GM12878 (cell line): ENCODE measurements at regions of chr11 and their contacts with region 1.

Region 1: GRCh38 chr11:79400717-79401686 is 39.8 kb downstream of the TENM4 start:
- DNase-seq: no peak
- ATAC-seq: peak; percentile 97
- H3K4me3 ChIP-seq: no peak overlapping the region
- H3K27ac ChIP-seq: no peak overlapping the region
- H3K4me1 ChIP-seq: 0 out of 2 replicates have a peak, but pooled peaks cover 3% of the 10 kb centered on the region
- H3K27me3 ChIP-seq: no peaks in the 10 kb centered on the region
- CTCF ChIP-seq: peak; percentile 77 to 82 (median 79)
- EP300 ChIP-seq: no peak
- POLR2A ChIP-seq: no peak
- RAD21 ChIP-seq: peak; percentile 78

Region 2: GRCh38 chr11:79331203-79331901 is 69.7 kb before region 1 on chr11:
- CTCF ChIA-PET with region 1: no interaction called
- POLR2A ChIA-PET with region 1: no interaction called
- RAD21 ChIA-PET with region 1: no interaction called
- SMC1A ChIA-PET with region 1: no interaction called
- in situ Hi-C with region 1: no loop called
- intact Hi-C with region 1: no loop called
- DNase-seq: no peak
- ATAC-seq: no peak
- H3K4me3 ChIP-seq: no peak overlapping the region
- H3K27ac ChIP-seq: no peak overlapping the region
- H3K4me1 ChIP-seq: no peaks in the 10 kb centered on the region
- H3K27me3 ChIP-seq: peaks cover 0 to 10% of the 10 kb centered on the region in 2 experiments; a peak in 1 of 4 replicates
- CTCF ChIP-seq: no peak
- EP300 ChIP-seq: no peak
- POLR2A ChIP-seq: no peak
- RAD21 ChIP-seq: no peak

Region 3: DNA sequence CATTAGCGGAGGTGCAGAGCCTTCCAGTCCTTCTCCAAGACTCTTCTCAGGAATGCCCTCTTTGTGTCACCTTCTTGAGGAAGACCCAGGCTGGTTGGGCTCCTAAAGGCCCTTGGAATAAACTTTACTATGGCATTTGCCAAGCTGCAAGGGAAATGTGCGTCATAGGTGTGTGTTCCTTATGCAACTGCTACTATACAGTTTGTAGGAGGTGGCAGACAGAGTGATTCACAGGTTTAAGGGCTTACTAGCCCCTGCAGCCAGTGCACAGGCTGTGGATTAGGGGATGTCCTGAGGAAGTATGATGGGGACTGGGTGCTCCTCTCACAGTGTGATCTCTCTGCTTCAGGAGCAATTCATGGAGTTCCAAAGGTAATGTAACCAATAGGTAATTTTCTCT is 34.8 kb before region 1 on chr11:
- CTCF ChIA-PET with region 1: interaction called, 15 read pairs
- POLR2A ChIA-PET with region 1: no interaction called
- RAD21 ChIA-PET with region 1: interaction called, 3 read pairs
- SMC1A ChIA-PET with region 1: interaction called, 4 read pairs
- in situ Hi-C with region 1: no loop called
- intact Hi-C with region 1: no loop called
- DNase-seq: no peak
- ATAC-seq: no peak
- H3K4me3 ChIP-seq: no peak overlapping the region
- H3K27ac ChIP-seq: no peak overlapping the region
- H3K4me1 ChIP-seq: no peaks in the 10 kb centered on the region
- H3K27me3 ChIP-seq: no peaks in the 10 kb centered on the region
- CTCF ChIP-seq: no peak
- EP300 ChIP-seq: no peak
- POLR2A ChIP-seq: no peak
- RAD21 ChIP-seq: no peak

Region 4: GRCh38 chr11:79421820-79422219 is 20.8 kb after region 1 on chr11:
- CTCF ChIA-PET with region 1: interaction called, 15 read pairs
- POLR2A ChIA-PET with region 1: no interaction called
- RAD21 ChIA-PET with region 1: no interaction called
- SMC1A ChIA-PET with region 1: interaction called, 7 read pairs
- in situ Hi-C with region 1: no loop called
- intact Hi-C with region 1: no loop called
- DNase-seq: no peak
- ATAC-seq: no peak
- H3K4me3 ChIP-seq: no peak overlapping the region
- H3K27ac ChIP-seq: no peak overlapping the region
- H3K4me1 ChIP-seq: no peaks in the 10 kb centered on the region
- H3K27me3 ChIP-seq: peaks cover 0 to 1% of the 10 kb centered on the region in 2 experiments; a peak in 2 of 4 replicates
- CTCF ChIP-seq: no peak
- EP300 ChIP-seq: no peak
- POLR2A ChIP-seq: no peak
- RAD21 ChIP-seq: no peak

Region 5: DNA sequence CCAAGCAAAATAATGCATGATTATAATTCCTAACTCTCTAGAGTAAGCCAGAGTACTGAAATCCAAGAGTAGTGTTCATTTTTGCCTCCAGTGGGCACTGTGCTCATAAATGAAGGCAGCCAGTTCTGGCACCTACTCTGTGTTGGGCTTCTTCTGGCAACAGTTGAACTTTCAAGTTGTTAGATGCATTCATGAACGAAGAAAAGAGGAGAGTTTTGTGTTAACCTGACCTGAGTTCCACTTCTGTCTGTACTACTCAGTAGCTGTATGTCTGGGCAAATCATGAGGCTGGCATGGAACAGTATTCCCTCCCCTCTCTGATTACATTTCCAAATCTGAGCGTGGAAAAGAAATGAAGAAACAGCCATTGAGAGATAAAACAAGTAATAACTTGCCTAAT is 60.1 kb after region 1 on chr11:
- CTCF ChIA-PET with region 1: interaction called, 12 read pairs
- POLR2A ChIA-PET with region 1: no interaction called
- RAD21 ChIA-PET with region 1: interaction called, 5 read pairs
- SMC1A ChIA-PET with region 1: interaction called, 5 read pairs
- in situ Hi-C with region 1: no loop called
- intact Hi-C with region 1: no loop called
- DNase-seq: no peak
- ATAC-seq: peak; percentile 91
- H3K4me3 ChIP-seq: no peak overlapping the region
- H3K27ac ChIP-seq: no peak overlapping the region
- H3K4me1 ChIP-seq: no peaks in the 10 kb centered on the region
- H3K27me3 ChIP-seq: no peaks in the 10 kb centered on the region; a peak in 2 of 4 replicates
- CTCF ChIP-seq: peak; percentile 47 to 58 (median 56)
- EP300 ChIP-seq: no peak
- POLR2A ChIP-seq: no peak
- RAD21 ChIP-seq: peak; percentile 63

Region 6: DNA sequence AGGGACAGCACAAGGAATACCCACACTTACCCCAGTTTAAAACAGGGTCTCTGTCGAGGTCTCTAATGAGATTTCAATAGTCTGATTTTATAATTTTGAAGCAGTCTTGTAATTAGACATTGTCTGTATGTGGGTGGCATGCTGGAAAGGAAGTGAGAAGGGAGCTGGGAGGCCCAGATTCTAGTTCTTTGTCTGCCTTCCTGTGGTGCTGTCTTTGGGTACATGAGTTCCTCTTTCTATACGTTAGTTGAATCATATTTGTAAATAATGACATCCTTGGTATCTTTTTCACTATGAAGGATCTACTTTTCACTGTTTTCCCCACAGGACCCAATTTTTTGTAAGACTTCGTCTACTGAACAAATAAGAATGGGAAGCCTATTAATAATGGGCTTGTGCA is 81.8 kb after region 1 on chr11:
- CTCF ChIA-PET with region 1: interaction called, 230 read pairs
- POLR2A ChIA-PET with region 1: interaction called, 5 read pairs
- RAD21 ChIA-PET with region 1: interaction called, 16 read pairs
- SMC1A ChIA-PET with region 1: interaction called, 127 read pairs
- in situ Hi-C with region 1: loop called (anchors 5 kb)
- intact Hi-C with region 1: no loop called
- DNase-seq: peak; percentile 72
- ATAC-seq: peak; percentile 89
- H3K4me3 ChIP-seq: no peak overlapping the region
- H3K27ac ChIP-seq: no peak overlapping the region; the same call in 1 of the 2 replicates
- H3K4me1 ChIP-seq: peaks cover 26% of the 10 kb centered on the region
- H3K27me3 ChIP-seq: no peaks in the 10 kb centered on the region
- CTCF ChIP-seq: no peak
- EP300 ChIP-seq: peak; percentile 85 to 99; a peak in 3 of 4 replicates
- POLR2A ChIP-seq: no peak
- RAD21 ChIP-seq: no peak